GM18951 (cell line): ENCODE measurements at regions of chr1 and their contacts with region 1.

Region 1: DNA sequence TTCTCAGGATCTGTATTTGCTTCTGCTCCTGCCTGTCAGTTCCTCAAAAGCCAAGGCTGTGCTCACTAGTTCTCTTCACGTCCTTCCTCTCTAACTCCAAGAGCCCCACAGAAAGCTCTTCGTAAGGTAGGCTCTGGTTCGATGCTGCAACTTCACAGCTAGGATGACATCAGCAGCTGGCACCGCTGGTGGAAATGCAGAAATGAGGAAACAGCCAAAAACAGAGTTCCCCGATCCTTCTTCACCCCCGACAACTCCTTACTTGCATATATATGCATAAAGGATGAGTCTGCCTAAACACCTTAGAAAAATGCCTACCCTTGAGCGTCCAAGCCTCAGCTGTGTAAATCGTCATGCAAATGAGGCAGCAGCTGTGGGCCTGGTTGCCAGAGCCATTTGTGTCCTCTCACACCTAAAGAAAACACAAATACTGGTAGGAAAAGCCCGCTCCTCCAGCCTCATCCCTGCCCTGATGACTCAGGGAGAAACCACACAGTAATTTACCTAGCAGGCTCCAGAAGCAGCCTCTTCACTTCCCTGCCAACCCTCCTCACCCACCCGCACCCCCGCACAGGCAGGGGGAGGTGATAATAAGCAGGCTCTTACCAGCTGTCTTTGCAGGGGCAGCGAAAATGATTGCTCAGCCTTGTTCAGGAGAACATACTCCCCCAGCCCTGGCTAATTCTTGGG is 28.2 kb downstream of the BATF3 start:
- POLR2A ChIP-seq: no peak

Region 2: GRCh38 chr1:212774584-212774983 is 103.1 kb after region 1 on chr1:
- in situ Hi-C with region 1: loop called (anchors 10 kb)
- POLR2A ChIP-seq: no peak